ENCODE measurements at regions of chr1 and their contacts with region 1.

Region 1: GRCh38 chr1:52996653-52997052 is 65.4 kb upstream of the PODN start:
- DNase-seq: peak; percentile 16
- ATAC-seq: 0 out of 2 replicates have a peak, but pooled peaks have one; percentile 35
- H3K4me3 ChIP-seq: no peak overlapping the region
- H3K27ac ChIP-seq: no peak overlapping the region
- H3K4me1 ChIP-seq: no peaks in the 10 kb centered on the region
- H3K27me3 ChIP-seq: no peaks in the 10 kb centered on the region
- CTCF ChIP-seq: no peak

Region 2: GRCh38 chr1:51976846-51977535 is 1019.7 kb before region 1 on chr1:
- CTCF ChIA-PET with region 1: no interaction called
- POLR2A ChIA-PET with region 1: no interaction called
- intact Hi-C with region 1: no loop called
- DNase-seq: peak; percentile 72
- ATAC-seq: peak; percentile 87
- H3K4me3 ChIP-seq: no peak overlapping the region
- H3K27ac ChIP-seq: peak overlapping the region; percentile 15; the same call in 1 of the 2 replicates
- H3K4me1 ChIP-seq: peaks cover 35% of the 10 kb centered on the region
- H3K27me3 ChIP-seq: no peaks in the 10 kb centered on the region
- CTCF ChIP-seq: no peak

Region 3: GRCh38 chr1:52937433-52938182 is 59.0 kb before region 1 on chr1:
- CTCF ChIA-PET with region 1: no interaction called
- POLR2A ChIA-PET with region 1: no interaction called
- intact Hi-C with region 1: loop called (anchors 10 kb)
- DNase-seq: no peak
- ATAC-seq: no peak
- H3K4me3 ChIP-seq: no peak overlapping the region
- H3K27ac ChIP-seq: no peak overlapping the region
- H3K4me1 ChIP-seq: no peaks in the 10 kb centered on the region
- H3K27me3 ChIP-seq: no peaks in the 10 kb centered on the region
- CTCF ChIP-seq: no peak

Region 4: DNA sequence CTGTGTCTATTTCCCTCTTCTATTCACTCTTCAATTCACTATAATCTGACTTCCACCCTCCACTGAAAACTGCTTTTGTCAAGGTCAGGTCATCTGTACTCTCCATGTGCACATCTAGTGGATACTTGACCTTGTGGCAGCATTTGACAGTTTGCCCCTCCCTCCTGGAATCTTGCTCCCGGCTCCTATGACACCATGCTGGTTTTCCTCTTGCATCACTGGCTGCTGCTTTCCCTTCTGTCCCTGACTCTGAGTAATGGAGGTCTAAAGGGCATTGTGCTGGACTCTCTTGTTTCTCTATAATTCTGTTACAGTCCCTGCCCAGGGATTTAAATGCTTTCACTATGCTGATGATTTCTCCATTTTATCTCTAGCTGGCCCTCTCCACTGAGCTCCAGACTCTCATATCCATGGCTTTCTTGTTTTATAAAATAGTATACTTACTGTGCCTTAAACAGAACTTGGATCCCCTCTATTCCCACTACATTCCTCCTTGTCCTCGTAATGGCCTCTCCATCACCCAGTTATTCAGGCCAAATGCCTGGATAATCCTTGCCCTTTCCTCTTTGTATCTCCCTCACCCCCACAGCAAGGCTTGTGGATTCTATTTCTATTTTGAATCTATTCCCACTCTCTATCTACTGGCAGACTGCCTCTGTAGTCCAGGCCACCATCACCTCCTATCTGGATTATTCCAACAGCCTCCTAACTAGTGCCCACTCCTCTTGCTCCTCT is 28.5 kb after region 1 on chr1:
- CTCF ChIA-PET with region 1: no interaction called
- POLR2A ChIA-PET with region 1: no interaction called
- intact Hi-C with region 1: no loop called
- DNase-seq: no peak
- ATAC-seq: no peak
- H3K4me3 ChIP-seq: no peak overlapping the region
- H3K27ac ChIP-seq: no peak overlapping the region
- H3K4me1 ChIP-seq: no peaks in the 10 kb centered on the region
- H3K27me3 ChIP-seq: no peaks in the 10 kb centered on the region
- CTCF ChIP-seq: no peak

Measured in PC-3 (cell line).